Uterus (tissue), 4 donors: ENCODE measurements at regions of chr2 and their contacts with region 1.

Region 1: GRCh38 chr2:241271641-241272297 is 43.7 kb downstream of the HDLBP start:
- DNase-seq: peak; percentile 78 to 81
- H3K4me3 ChIP-seq: peak overlapping the region; percentile 58 to 100
- H3K27ac ChIP-seq: peak overlapping the region; percentile 95 to 97
- H3K4me1 ChIP-seq: peaks cover 4 to 12% of the 10 kb centered on the region in 2 donors
- H3K27me3 ChIP-seq: no peaks in the 10 kb centered on the region
- CTCF ChIP-seq: no peak
- POLR2A ChIP-seq: peak; percentile 22 to 59

Region 2: DNA sequence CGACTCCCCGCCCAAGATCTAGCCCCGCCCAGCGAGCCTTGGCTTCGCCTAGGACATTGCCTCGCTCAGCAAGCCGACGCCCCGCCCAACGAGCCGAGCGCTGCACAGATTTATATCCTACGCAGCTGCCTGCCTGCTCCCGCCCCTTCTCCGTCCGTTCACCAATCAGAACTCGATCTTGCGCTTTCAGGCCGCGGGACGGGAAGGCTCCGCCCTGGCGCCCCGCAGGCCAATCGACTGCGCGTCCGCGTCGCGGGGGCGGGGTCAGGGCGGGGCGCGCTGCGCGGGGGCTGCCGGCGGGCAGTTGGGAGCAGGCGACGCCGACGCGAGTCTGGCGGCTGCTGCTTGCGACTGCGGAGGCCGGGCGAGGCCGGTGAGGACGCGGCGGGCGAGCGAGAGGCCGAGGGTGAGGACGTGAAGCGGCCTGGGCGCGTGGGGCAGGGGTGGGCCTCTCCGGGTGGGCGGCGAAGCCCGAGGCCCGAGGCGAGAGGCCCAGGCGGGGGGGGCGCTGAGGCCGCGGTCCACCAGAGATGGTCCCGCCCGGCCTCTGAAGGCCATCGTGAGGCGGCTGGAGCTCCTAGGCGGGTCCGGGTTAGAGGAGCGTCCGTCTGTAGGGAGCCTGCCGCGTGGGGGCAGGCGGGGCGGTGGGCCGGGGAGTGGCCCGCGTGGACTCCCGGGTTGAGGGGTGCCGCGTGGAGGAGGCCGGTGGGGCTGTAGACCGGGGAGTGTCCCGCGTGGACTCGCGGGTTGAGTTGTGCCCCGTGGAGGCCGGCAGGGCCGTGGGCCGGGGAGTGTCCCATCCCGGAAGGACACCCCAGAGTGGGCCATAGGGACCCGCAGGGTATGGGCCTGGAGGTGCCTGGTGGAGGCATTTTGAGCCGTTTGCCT is 84.5 kb after region 1 on chr2 and contains the start of gene FARP2:
- intact Hi-C with region 1: loop called (anchors 5 kb)
- DNase-seq: peak; percentile 99 to 100
- H3K4me3 ChIP-seq: peak within 1 kb of the TSS; percentile 59 to 99
- H3K27ac ChIP-seq: peak within 1 kb of the TSS; percentile 83 to 96
- H3K4me1 ChIP-seq: peaks cover 0 to 6% of the 10 kb centered on the region in 2 donors
- H3K27me3 ChIP-seq: no peaks in the 10 kb centered on the region
- CTCF ChIP-seq: no peak
- POLR2A ChIP-seq: peak; percentile 72 to 88
- total RNA-seq, gene FARP2: 20.0 to 92.0 (median 40.6) TPM